Mammary epithelial cell (primary cell): ENCODE measurements at regions of chr21 and their contacts with region 1.

Region 1: GRCh38 chr21:40567501-40567900 is 279.5 kb downstream of the DSCAM start:
- DNase-seq: no peak
- H3K4me3 ChIP-seq: no peak overlapping the region
- H3K27ac ChIP-seq: no peak overlapping the region
- H3K4me1 ChIP-seq: peaks cover 3% of the 10 kb centered on the region
- H3K27me3 ChIP-seq: no peaks in the 10 kb centered on the region
- CTCF ChIP-seq: no peak

Region 2: GRCh38 chr21:40489001-40489400 is 78.5 kb before region 1 on chr21:
- CTCF ChIA-PET with region 1: no interaction called
- dilution Hi-C with region 1: loop called (anchors 5 kb)
- in situ Hi-C with region 1: no loop called
- intact Hi-C with region 1: no loop called
- DNase-seq: no peak
- H3K4me3 ChIP-seq: no peak overlapping the region
- H3K27ac ChIP-seq: no peak overlapping the region
- H3K4me1 ChIP-seq: no peaks in the 10 kb centered on the region
- H3K27me3 ChIP-seq: no peaks in the 10 kb centered on the region
- CTCF ChIP-seq: no peak

Region 3: DNA sequence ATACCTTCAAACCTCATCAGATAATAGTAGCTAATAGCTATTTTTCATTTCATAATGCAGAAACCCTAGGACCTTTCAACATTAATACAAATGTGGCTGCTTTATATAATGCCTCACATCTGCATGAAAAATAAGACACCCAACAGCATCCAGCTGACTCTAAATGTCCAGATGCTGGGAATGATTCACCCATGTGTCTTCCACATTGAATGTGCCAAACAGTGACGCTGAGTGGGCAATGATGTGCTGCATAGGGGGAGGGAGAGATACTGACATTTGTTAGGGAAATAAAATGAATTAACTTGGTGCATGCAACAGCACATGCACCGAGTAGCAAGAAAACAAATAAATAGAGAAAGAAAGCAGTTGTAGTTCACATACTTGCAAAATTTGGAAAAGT is 80.2 kb after region 1 on chr21:
- CTCF ChIA-PET with region 1: no interaction called
- dilution Hi-C with region 1: no loop called
- in situ Hi-C with region 1: no loop called
- intact Hi-C with region 1: no loop called
- DNase-seq: no peak
- H3K4me3 ChIP-seq: no peak overlapping the region
- H3K27ac ChIP-seq: no peak overlapping the region
- H3K4me1 ChIP-seq: no peaks in the 10 kb centered on the region
- H3K27me3 ChIP-seq: no peaks in the 10 kb centered on the region
- CTCF ChIP-seq: no peak